Ovary (tissue), 10 donors: ENCODE measurements at regions of chr11 and their contacts with region 1.

Region 1: GRCh38 chr11:124837491-124837856 is 27.8 kb upstream of the ROBO3 start:
- DNase-seq: no peak
- H3K4me3 ChIP-seq: no peak overlapping the region
- H3K27ac ChIP-seq: no peak overlapping the region
- H3K4me1 ChIP-seq: peaks cover 6% of the 10 kb centered on the region
- H3K27me3 ChIP-seq: peaks cover 9% of the 10 kb centered on the region
- CTCF ChIP-seq: no peak
- EP300 ChIP-seq: no peak
- POLR2A ChIP-seq: no peak

Region 2: GRCh38 chr11:124656774-124657630 is 180.5 kb before region 1 on chr11:
- intact Hi-C with region 1: loop called in 1 of 4 experiments (anchors 5 kb)
- DNase-seq: no peak
- H3K4me3 ChIP-seq: no peak overlapping the region
- H3K27ac ChIP-seq: no peak overlapping the region
- H3K4me1 ChIP-seq: no peaks in the 10 kb centered on the region
- H3K27me3 ChIP-seq: no peaks in the 10 kb centered on the region
- CTCF ChIP-seq: no peak
- EP300 ChIP-seq: no peak
- POLR2A ChIP-seq: no peak

Region 3: DNA sequence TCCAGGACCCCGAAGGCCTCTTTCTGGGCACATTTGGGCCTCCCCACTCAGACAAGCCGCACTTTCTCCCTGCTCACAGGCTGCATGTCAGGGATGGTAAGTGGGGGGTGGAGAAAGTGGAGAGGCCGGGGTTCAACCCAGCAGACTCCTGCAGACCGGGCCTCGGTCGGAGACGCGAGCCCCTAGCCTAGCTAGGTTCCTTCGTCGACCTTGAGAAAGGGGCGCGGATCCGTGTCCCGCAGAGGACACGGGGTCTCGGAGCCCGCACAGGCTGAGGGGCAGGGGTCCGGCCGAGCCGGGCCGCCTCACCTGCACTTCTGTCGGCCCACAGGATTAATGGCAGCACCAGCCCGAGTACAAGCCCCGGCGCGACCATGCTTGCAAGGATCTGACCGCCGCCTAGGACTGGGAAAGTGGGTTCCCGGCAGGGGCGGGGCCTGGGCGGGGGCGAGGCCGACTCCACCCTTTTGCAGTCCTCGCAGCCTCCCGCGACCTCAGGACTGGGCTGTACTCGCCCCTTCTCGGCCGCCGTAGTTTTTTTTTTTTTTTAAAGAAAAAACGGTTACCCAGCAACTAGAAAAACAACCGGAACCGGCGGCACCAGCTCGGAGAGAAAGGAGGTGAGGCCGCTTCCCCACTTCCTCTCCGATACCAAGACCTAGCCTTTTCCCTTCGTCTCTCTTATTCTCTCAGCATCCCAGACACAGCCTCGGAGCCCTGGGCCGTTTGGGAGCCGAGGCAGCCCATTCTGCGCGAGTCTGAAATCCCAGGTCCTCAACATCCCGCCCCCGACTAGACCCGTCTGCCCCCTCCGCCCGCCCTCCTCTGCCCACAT is 163.9 kb before region 1 on chr11 and contains the starts of genes SIAE and SPA17:
- intact Hi-C with region 1: loop called in 3 of 4 experiments (anchors 2 to 5 kb)
- DNase-seq: peak; percentile 89 to 94 (median 92)
- H3K4me3 ChIP-seq: peak within 1 kb of the TSS; percentile 79
- H3K27ac ChIP-seq: peak within 1 kb of the TSS; percentile 13 to 67
- H3K4me1 ChIP-seq: peaks cover 1% of the 10 kb centered on the region
- H3K27me3 ChIP-seq: no peaks in the 10 kb centered on the region
- CTCF ChIP-seq: no peak
- EP300 ChIP-seq: peak; percentile 37
- POLR2A ChIP-seq: peak; percentile 51
- total RNA-seq, gene SIAE: 2.3 to 14.7 (median 8.1) TPM
- total RNA-seq, gene SPA17: 1.3 to 30.1 (median 3.0) TPM

Region 4: GRCh38 chr11:124763156-124763947 is 74.1 kb before region 1 on chr11:
- intact Hi-C with region 1: loop called in 2 of 4 experiments (anchors 5 to 10 kb)
- DNase-seq: peak; percentile 77 to 91 (median 86)
- H3K4me3 ChIP-seq: peak overlapping the region; percentile 41
- H3K27ac ChIP-seq: no peak overlapping the region
- H3K4me1 ChIP-seq: peaks cover 4% of the 10 kb centered on the region
- H3K27me3 ChIP-seq: peaks cover 7% of the 10 kb centered on the region
- CTCF ChIP-seq: peak; percentile 38 to 43 (median 40)
- EP300 ChIP-seq: no peak
- POLR2A ChIP-seq: no peak